Activated CD4-positive, alpha-beta T cell treated with anti-CD3 and anti-CD28 coated beads, Interleukin-2, amount 10 ng/mL, durations not matched to agents 24 days and 14 days (primary cell): ENCODE measurements at regions of chr3 and their contacts with region 1.

Region 1: DNA sequence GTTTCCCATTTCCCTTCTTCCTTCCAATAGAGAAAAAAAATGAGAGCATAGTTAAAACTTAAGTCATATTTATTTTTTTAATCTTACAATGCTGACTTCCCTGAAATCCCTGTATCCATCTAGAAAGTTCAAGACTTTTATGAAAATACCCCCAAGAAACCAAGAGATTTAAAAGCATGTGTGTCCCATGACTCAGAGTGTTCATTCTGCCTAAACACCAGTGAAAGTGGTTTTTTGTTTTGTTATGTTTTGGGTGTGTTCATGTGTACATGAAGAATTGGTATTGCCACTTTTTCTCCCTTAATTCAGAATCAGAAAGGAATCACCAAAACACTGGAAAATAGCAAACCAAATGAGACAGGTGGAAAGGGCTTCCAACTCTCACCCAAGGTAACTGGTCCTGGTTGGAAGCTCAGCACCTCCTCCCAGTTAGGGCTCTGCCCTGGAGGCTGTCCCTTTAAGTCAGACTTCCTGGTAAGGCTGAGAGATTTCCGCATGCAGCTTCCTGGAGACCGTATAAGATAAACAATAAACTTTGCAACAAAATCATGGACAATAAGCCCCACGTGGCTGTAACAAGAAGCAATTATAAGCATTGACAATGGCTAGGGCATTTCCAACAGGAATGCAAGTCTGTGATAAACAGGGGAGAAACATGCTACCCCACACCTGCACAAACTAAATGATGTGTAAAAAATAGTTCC is 121.9 kb upstream of the ARHGEF3 start:
- DNase-seq: peak; percentile 89
- H3K4me3 Mint-ChIP-seq: peak overlapping the region; percentile 41
- H3K27ac Mint-ChIP-seq: peak overlapping the region; percentile 77
- H3K4me1 Mint-ChIP-seq: peaks cover 67% of the 10 kb centered on the region
- H3K27me3 Mint-ChIP-seq: no peaks in the 10 kb centered on the region

Region 2: GRCh38 chr3:56942523-56942922 is 18.9 kb after region 1 on chr3:
- intact Hi-C with region 1: loop called (anchors 2 kb)
- DNase-seq: no peak
- H3K4me3 Mint-ChIP-seq: peak overlapping the region; percentile 52
- H3K27ac Mint-ChIP-seq: peak overlapping the region; percentile 67
- H3K4me1 Mint-ChIP-seq: peaks cover 19% of the 10 kb centered on the region
- H3K27me3 Mint-ChIP-seq: peaks cover 4% of the 10 kb centered on the region